ENCODE measurements at regions of chr6 and their contacts with region 1.

Region 1: DNA sequence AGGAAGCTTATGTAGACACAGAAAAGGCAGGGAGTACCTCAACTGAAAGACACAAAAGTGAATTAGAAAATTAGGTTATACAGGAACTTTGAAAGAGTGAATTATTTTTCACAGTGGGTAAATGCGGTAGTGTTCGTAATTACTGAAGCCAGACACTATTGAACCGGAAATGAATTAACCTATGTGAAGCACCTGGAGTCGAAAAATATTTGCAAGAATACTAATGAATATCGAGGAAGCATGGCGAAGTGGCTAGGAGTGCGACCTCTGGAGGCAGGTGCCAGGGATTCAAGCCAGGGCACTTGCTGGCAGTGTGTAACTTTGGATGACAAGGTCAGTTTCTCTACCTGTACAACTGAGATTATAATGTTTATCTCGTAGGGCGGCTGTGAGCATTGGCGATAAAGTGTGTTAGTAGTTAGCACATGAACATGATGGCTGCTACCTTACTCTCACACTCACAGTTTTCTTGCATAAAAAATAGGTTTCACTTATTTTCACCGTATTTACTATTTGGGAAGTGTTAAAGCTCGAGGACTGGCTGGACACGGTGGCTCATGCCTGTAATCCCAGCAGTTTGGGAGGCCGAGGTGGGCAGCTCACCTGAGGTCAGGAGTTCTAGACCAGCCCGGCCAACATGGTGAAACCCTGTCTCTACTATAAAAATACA is 567 bp upstream of the SLC18B1 start:
- DNase-seq: peak; percentile 83
- ATAC-seq: no peak
- H3K4me3 ChIP-seq: peak overlapping the region in 2 of 3 experiments; percentile 84 to 89; a peak in 4 of 6 replicates
- H3K27ac ChIP-seq: peak overlapping the region; percentile 45
- H3K4me1 ChIP-seq: 0 out of 2 replicates have a peak, but pooled peaks cover 4% of the 10 kb centered on the region
- H3K27me3 ChIP-seq: no peaks in the 10 kb centered on the region
- CTCF ChIP-seq: peak; percentile 93
- EP300 ChIP-seq: no peak
- POLR2A ChIP-seq: peak in 1 of 2 experiments; percentile 21; a peak in 1 of 4 replicates
- RAD21 ChIP-seq: no peak; the same call in 1 of the 2 replicates

Region 2: GRCh38 chr6:132548746-132549463 is 250.1 kb before region 1 on chr6:
- CTCF ChIA-PET with region 1: no interaction called
- POLR2A ChIA-PET with region 1: no interaction called
- in situ Hi-C with region 1: no loop called
- intact Hi-C with region 1: no loop called
- DNase-seq: no peak
- ATAC-seq: no peak
- H3K4me3 ChIP-seq: no peak overlapping the region
- H3K27ac ChIP-seq: no peak overlapping the region
- H3K4me1 ChIP-seq: no peaks in the 10 kb centered on the region
- H3K27me3 ChIP-seq: no peaks in the 10 kb centered on the region
- CTCF ChIP-seq: no peak
- EP300 ChIP-seq: no peak
- POLR2A ChIP-seq: no peak
- RAD21 ChIP-seq: no peak

Region 3: DNA sequence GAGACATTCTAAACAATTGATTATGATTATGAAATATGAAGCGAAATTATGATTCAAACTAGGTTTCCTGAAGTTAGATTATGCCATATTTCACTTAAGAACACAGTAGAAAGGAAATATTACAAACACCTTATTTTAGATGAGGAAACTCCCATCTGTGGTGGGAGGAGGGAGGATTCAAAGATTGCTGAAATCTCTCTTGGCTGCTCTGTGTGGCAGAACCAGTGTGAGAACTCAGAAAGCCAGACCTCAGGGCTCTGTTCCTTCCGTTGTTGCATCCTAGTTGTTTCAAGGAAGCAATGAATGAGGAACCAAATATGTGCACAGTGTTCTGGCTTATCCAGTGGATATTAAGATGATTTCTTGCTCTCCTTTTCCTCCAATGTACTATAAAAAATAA is 211.6 kb before region 1 on chr6:
- CTCF ChIA-PET with region 1: no interaction called
- POLR2A ChIA-PET with region 1: no interaction called
- in situ Hi-C with region 1: no loop called
- intact Hi-C with region 1: no loop called
- DNase-seq: no peak
- ATAC-seq: no peak
- H3K4me3 ChIP-seq: no peak overlapping the region
- H3K27ac ChIP-seq: no peak overlapping the region
- H3K4me1 ChIP-seq: no peaks in the 10 kb centered on the region
- H3K27me3 ChIP-seq: no peaks in the 10 kb centered on the region
- CTCF ChIP-seq: no peak
- EP300 ChIP-seq: no peak
- POLR2A ChIP-seq: no peak
- RAD21 ChIP-seq: no peak

Region 4: DNA sequence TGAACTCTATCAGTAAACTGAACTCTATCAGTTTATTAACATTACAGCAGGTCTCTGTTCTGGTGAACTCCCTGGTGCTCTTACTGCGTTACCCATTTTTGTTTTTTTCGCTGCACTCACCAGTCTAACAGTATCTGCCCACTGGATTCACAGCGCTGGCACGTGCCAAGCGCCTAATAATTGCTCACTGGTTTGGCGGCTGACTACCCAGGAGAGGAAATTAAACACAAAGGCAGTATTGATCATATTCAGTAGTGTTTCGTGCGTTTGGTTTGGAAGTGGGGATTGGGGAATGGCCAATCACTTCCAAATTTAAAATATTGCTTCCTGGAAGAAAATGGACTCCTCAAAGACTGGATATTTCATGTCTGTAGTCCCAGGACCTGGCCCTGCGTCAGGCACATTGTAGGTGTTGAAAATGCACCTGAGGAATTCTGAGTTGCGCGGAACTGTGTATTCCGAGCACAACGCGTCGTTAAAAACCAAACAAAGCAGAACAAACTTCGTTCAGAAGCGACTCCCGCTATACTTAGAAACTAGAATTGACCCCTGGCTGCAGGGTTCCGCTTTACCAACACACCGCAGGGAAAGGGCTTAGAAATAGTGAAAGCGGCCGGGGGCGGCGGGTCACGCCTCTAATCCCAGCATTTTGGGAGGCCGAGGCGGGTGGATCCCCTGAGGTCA is 14.3 kb after region 1 on chr6:
- CTCF ChIA-PET with region 1: no interaction called
- POLR2A ChIA-PET with region 1: interaction called, 96 read pairs
- in situ Hi-C with region 1: no loop called
- intact Hi-C with region 1: loop called (anchors 2 kb)
- DNase-seq: peak; percentile 57
- ATAC-seq: peak; percentile 54
- H3K4me3 ChIP-seq: peak overlapping the region; percentile 59 to 96 (median 66)
- H3K27ac ChIP-seq: peak overlapping the region; percentile 95
- H3K4me1 ChIP-seq: peaks cover 43% of the 10 kb centered on the region
- H3K27me3 ChIP-seq: no peaks in the 10 kb centered on the region; a peak in 2 of 5 replicates
- CTCF ChIP-seq: no peak
- EP300 ChIP-seq: no peak
- POLR2A ChIP-seq: no peak; a peak in 1 of 4 replicates
- RAD21 ChIP-seq: no peak

Measured in HepG2 (cell line).